Calu3 (cell line): ENCODE measurements at regions of chr1 and their contacts with region 1.

Region 1: GRCh38 chr1:40454873-40455272 is 4.6 kb downstream of the ZFP69B start:
- DNase-seq: no peak
- H3K4me3 Mint-ChIP-seq: no peak overlapping the region
- H3K27ac Mint-ChIP-seq: no peak overlapping the region
- H3K4me1 Mint-ChIP-seq: peaks cover 13% of the 10 kb centered on the region
- H3K27me3 Mint-ChIP-seq: no peaks in the 10 kb centered on the region
- CTCF ChIP-seq: no peak

Region 2: DNA sequence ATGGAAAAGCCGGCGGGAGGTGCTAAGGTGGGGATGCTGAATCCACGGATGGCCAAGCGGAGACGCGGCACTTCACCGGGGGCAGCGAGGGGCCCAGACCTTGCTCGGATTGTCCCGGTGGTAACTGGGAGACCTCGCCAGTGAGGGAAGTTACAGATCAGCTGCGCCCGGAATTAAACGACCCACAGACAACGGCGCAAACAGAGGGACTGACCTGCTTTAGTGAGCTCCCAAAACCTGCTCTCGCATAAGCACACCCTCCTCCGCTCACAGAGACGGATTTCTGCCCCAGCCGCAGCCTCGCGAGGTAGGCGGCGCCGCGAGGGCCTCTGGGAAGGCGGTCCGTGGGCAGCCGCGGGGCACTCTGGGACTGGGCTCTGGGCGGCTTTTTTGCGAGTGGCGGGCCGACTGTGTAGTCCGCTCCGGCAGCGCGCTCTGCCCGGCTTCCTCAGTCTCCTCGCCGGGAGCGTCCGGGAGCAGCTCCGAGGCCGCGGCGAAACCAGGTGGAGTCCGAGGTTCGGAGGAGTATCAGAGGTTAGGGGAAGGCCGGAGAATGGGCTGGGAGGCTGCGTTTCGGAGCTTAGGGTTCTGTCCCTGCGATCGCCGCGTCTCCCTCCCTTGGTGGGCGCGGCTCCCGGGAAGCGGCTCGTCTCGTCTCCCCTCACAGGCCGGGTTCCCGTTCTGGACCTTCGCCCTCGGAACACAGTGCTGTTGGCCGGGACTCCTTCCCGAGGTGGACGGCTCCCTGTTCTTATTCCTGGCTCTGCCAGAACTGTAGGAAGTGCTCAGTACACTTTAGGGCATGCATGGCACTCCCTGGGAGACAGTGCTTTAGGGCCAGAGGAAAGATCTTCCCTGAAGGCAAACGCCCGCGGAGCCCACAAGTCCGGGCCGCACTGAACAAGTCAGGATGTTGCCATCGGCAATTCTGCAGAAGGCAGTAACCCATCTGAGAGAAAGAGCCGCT is 53.8 kb after region 1 on chr1 and contains the start of gene EXO5:
- CTCF ChIA-PET with region 1: interaction called, 3 read pairs
- intact Hi-C with region 1: loop called (anchors 5 kb)
- DNase-seq: peak; percentile 78
- H3K4me3 Mint-ChIP-seq: peak within 1 kb of the TSS; percentile 86
- H3K27ac Mint-ChIP-seq: peak within 1 kb of the TSS; percentile 61
- H3K4me1 Mint-ChIP-seq: peaks cover 9% of the 10 kb centered on the region
- H3K27me3 Mint-ChIP-seq: no peaks in the 10 kb centered on the region
- CTCF ChIP-seq: no peak
- total RNA-seq, gene EXO5: 11.7 and 12.2 TPM in 2 replicates